Astrocyte of the cerebellum (primary cell): ENCODE measurements at regions of chr9 and their contacts with region 1.

Region 1: GRCh38 chr9:16540743-16541613 is 329.5 kb downstream of the BNC2 start:
- DNase-seq: peak; percentile 49
- H3K4me3 ChIP-seq: no peak overlapping the region
- CTCF ChIP-seq: no peak

Region 2: GRCh38 chr9:16289639-16290038 is 251.3 kb before region 1 on chr9:
- in situ Hi-C with region 1: no loop called
- DNase-seq: no peak
- H3K4me3 ChIP-seq: no peak overlapping the region
- CTCF ChIP-seq: no peak

Region 3: DNA sequence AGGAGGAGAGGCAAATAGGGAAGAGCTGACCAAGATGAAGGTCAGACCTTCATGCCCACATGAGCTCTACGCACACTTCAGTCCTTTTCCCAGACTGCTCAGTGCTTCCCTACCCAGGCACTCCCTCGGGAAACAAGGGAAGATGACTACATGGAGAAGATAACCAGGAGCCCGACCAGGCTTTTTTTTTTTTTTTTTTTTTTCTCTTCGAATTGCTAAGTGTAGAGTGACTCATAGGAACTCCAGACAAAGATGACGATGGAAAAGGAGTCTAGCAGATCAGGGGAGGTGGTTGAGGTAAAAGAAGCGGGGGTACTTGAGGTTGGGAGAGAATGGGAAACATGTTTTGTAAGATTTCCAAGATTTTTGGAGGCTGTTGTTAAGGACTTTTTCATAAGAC is 196.6 kb before region 1 on chr9:
- in situ Hi-C with region 1: loop called (anchors 10 kb)
- DNase-seq: peak; percentile 91
- H3K4me3 ChIP-seq: no peak overlapping the region
- CTCF ChIP-seq: no peak

Region 4: GRCh38 chr9:16475257-16475656 is 65.7 kb before region 1 on chr9:
- in situ Hi-C with region 1: no loop called
- DNase-seq: no peak
- H3K4me3 ChIP-seq: no peak overlapping the region
- CTCF ChIP-seq: no peak